Heart right ventricle (tissue), 16 donors: ENCODE measurements at regions of chr19 and their contacts with region 1.

Region 1: DNA sequence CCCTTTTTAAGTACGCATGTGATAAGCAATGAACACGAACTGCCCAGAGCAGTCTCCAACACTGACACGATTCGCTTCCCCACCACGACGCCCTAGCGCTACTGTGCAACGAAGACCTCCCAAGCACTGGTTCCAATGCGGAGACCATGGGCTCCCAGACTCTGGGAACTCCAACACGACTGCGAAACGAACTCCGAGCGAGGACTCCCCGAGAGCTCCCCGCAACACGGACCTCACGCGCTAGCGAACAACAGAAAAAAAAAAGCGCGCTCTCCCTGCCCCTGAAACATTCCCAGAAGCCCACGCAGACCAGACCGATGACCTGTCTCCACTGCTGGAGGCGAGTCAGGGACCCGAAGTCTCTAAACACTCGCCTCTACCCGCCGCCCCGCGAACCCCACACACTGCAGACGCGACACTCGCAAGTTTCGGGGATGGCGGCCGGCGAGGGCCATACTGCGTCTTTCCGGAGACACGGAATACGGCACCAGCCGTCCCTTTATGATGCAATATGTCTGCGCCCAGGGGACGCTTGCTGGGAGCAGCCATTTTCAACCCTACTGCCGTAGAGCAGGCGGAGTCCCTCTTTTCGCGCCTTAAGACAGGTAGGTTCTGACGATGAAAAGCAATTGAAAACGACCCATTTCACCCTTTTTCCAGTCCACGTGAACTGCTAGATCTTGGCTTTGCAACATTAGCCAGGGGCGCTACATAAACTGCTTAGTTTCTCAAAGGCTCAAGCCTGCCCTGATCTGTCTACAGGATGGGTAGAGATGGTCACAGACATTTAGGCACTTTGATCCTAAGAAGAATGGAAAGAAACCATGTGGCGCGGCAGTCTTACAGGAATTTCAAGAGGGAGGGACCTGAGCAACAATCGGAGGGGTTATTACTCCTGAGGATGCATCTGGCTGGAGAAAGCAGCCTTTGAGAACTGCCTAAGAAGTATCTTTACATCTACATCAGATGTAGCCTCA is at the start of gene ZNF577:
- DNase-seq: peak; percentile 91 to 96
- ATAC-seq: peak; percentile 97 to 100 (median 100)
- H3K4me3 ChIP-seq: peak within 1 kb of the TSS; percentile 55 to 95 (median 77)
- H3K27ac ChIP-seq: peak within 1 kb of the TSS in 9 of 10 donors; percentile 73 to 85 (median 79)
- H3K4me1 ChIP-seq: peaks cover 0 to 15% (median 10%) of the 10 kb centered on the region in 9 donors
- H3K27me3 ChIP-seq: no peaks in the 10 kb centered on the region
- CTCF ChIP-seq: no peak
- total RNA-seq, gene ZNF577: 4.6 to 12.4 (median 8.6) TPM

Region 2: DNA sequence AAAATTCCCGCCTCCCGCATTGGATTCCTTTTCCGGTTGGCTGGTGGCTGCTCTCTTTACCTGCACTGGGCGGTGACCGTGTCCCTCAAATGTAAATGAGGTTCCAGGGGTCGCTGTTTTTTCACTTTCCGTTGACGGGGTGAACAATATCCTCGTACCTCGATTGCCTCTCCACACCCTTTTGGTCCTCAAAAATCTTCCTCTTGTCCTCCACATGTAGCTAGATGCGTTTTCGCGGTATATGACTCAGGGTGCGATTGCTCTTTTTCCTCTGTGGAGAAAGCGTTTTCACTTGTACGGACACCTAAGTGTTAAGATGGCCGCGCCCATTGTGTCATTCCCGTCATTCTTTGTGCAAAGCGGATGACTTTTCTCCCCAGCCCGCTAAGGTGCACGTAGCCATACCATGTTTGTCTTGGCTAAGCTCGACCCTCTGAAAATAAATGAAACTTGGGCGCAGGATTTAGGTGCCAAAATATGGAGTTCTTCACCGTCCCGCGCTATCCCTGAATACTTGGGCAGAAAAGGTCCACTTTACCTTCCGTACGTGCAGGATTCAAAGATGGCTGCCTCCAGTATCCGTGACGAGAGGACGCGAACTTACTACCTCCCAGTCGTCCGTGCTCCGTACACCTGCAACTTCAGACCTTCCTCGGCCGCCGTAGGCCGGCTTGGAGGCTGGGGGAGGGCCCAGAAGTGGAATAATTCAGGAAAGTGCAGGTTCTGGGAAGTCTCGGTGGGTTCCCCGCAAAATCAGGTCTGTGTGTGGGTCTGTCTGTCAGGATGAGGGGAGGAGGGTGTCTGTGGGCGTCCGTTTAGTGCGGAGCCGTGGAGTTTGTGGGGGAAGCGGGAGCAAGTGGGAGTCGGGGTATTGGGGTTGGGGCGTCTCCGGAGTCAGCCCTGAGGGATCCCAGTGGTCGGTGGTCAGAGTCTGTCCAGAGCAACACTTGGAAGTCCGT is 39.3 kb after region 1 on chr19 and contains the start of gene ZNF613:
- intact Hi-C with region 1: no loop called
- DNase-seq: peak; percentile 86 to 92
- ATAC-seq: peak; percentile 96 to 99 (median 98)
- H3K4me3 ChIP-seq: peak within 1 kb of the TSS; percentile 69 to 91 (median 80)
- H3K27ac ChIP-seq: peak within 1 kb of the TSS; percentile 81 to 96 (median 89)
- H3K4me1 ChIP-seq: peaks cover 0 to 13% (median 10%) of the 10 kb centered on the region in 9 donors
- H3K27me3 ChIP-seq: no peaks in the 10 kb centered on the region
- CTCF ChIP-seq: peak in 6 of 9 donors; percentile 21 to 57 (median 36)
- total RNA-seq, gene ZNF613: 2.4 to 7.1 (median 5.2) TPM

Region 3: DNA sequence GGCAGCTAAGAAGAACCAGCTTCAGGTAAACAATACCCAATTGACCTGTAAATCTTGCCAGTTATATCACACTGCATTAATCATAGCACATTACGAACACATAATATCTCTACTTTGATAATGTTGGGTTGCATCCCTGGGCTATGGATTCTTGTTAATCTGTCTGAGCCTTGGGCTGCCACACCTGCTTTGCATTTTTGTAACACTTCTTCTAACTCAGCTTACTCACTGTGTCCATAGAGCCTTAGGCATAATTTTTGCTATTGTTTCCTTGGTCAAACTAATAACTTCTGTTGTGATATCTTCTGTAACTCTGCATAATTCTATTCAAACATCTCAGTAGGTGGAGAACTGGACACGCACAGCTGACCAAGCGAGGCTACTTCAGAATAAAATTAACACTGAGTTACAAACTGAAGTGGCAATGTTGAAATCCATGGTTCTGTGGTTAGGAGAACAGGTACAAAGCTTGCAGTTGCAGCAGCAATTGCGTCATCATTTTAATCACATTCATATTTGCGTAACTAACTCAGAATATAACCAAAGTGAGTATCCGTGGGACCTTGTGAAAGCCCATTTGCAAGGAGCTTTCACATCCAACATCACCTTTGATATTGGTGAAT is 92.4 kb after region 1 on chr19:
- intact Hi-C with region 1: loop called in 2 of 10 experiments (anchors 5 to 10 kb)
- DNase-seq: no peak
- ATAC-seq: no peak
- H3K4me3 ChIP-seq: no peak overlapping the region
- H3K27ac ChIP-seq: no peak overlapping the region
- H3K4me1 ChIP-seq: peaks cover under 1 to 28% (median 6%) of the 10 kb centered on the region in 9 donors
- H3K27me3 ChIP-seq: no peaks in the 10 kb centered on the region
- CTCF ChIP-seq: no peak

Region 4: DNA sequence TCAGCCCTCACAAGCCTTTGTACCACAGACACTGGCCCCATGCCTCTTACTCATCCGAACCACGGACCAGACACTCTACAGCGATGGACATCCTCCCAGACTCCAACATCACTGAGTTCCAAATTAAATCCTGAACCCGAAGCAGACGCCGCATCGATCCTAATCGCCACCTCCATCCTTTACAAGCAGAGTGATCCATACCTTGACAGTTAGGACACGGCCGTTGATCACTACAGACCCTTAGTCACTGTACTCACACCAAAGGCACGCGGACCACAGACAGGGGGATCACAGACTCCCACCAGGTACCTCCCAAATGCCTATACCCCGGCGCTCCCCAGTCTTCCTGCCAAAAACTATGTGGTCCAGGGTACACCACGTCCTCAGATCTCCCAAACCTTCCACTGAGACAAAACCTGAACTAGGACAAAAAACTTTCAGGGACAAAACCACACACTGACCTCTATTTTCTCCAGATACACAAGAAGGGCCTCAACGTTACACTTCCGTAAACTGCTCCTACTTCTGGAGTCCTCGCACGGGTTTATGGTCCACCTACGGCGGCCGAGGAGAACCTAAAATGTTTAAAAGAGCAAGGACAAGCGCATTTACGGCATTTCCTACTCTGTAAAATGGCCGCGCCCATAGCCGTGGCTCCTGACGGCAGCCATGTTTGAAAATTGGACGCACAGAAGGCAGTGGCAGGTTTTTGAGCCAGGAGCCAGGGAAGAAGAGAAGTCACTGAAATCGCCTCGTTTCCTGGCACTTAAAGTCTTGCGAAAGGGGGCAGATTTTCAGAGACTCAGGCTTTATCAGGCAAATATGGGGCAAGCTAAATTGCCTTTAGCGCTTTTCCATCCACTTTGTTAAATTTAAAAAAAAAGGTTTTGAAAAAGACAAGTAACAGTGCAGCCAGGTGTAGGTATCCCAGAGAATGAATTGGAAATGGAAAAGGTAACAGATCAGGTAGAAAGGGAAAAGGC is 98.8 kb after region 1 on chr19 and contains the start of gene ZNF350:
- intact Hi-C with region 1: loop called in 2 of 10 experiments (anchors 5 to 10 kb)
- DNase-seq: peak; percentile 84 to 97
- ATAC-seq: peak; percentile 98 to 100 (median 99)
- H3K4me3 ChIP-seq: peak within 1 kb of the TSS; percentile 68 to 93 (median 84)
- H3K27ac ChIP-seq: peak within 1 kb of the TSS in 9 of 10 donors; percentile 34 to 90 (median 76)
- H3K4me1 ChIP-seq: peaks cover 7 to 37% (median 16%) of the 10 kb centered on the region in 9 donors
- H3K27me3 ChIP-seq: no peaks in the 10 kb centered on the region
- CTCF ChIP-seq: no peak
- total RNA-seq, gene ZNF350: 5.3 to 10.1 (median 7.5) TPM